WTC11 (cell line): ENCODE measurements at regions of chr16 and their contacts with region 1.

Region 1: DNA sequence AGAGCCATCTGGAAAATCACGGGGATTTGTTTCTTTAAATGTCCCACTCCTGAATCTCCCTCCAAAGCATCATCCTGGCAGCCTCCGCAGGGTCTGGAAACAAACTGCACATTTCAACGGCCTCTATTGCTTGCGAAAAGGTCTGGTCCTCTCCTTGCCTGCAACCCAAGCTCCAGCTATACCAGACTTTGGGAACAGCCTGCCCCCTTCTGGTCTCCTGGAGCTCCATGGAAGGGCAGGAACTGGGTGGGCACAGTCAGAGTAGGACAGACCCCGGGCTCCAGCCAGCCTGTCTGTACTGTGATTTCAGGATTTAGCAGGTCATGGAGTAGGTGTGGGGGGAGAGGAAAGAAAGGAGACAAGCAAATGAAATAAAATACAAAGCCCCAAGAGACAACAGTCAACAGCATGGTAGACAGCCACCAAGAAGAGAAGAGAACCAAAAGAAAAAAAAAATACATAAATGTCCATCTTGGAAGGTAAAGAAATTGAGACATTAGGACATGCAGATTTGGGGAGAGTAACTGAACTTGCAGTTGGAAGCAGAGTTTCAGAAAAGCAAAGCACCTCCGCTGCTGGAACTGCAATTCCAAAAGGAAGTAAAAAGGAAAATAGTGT is 2.7 kb downstream of the XYLT1 start:
- DNase-seq: peak; percentile 77
- ATAC-seq: peak; percentile 78
- H3K4me3 Mint-ChIP-seq: peak overlapping the region; percentile 39; the same call in 1 of the 2 replicates
- H3K27ac Mint-ChIP-seq: no peak overlapping the region
- H3K4me1 Mint-ChIP-seq: peaks cover 54% of the 10 kb centered on the region
- H3K27me3 Mint-ChIP-seq: peaks cover 16% of the 10 kb centered on the region
- CTCF ChIP-seq: no peak

Region 2: DNA sequence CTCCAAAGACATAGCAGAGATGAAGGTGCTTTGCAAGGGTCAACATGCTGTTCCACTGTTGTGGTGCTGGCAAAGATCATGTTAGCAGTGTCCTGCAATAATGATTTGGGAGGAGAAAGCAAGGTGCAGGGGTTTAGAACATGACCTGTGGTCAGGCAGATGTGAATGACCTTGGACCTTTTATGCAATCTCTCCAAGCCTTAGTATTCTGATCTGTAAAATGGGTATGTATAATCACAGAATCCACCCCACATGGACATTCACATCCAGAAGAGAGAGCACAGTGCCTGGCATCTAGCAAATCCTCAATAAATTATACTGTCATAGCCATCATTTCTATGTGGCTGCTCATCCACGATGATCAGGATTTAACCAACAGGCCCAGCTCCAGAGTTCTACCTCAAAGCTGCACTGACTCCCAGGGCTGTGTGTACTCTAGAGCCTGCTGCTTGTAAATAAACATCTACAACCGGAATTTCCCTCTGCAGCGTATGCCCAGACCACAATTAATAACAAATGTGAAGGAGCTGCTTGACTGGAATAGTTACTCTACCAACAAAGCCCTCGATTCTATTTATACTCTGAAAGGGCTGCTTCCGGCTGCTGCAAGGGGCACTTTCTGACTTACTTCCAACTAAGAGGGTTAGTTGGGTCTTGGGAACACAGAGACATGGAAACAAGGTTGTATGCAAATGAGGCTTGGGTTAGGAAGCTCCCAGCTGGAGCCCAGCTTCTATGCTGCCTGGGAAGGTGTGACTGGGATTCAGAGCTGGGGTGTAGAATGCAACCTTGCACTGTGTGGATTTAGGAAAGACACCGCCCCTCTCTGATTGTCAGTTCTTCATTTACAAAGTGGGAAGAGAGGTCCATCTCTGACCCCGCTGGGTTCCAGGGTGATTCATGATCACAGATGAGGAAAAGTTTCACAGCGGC is 262.5 kb before region 1 on chr16:
- CTCF ChIA-PET with region 1: interaction called, 11 read pairs
- POLR2A ChIA-PET with region 1: no interaction called
- DNase-seq: peak; percentile 31
- ATAC-seq: peak; percentile 96
- H3K4me3 Mint-ChIP-seq: peak overlapping the region; percentile 22; the same call in 1 of the 2 replicates
- H3K27ac Mint-ChIP-seq: peak overlapping the region; percentile 92
- H3K4me1 Mint-ChIP-seq: peaks cover 26% of the 10 kb centered on the region
- H3K27me3 Mint-ChIP-seq: no peaks in the 10 kb centered on the region
- CTCF ChIP-seq: no peak

Region 3: DNA sequence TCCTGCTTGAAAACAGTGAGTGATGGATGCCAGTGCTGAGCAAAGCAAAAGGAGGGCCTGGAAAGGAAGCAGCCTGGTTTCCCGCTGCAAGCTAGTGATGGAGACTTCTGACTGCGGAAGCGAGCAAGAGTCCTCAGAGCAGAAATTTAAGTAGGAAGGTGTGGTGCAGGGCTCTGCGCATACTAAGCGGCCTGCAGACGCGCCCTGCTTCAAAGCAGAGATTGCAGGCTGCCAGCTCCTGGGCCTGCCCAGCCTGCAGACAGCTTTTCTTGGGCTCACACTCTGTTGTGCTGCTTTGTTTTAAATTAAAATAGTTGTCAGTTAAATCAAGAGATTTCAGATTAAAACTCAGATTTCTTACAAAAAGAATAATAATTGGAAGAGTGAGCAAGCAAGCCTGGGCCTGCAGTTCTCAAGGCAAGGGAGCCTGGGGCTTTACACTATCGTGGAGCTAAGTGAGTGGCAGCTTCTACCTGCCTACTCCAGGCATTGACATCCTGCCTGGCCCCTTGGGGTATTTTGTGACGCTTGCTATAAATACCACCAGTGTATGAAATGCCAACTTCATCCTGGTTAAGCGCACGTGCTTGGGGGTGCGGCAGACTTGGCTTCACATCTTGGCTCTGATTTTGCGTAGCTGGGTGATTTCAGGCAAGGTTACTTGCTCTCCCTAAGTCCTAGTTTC is 234.6 kb before region 1 on chr16:
- CTCF ChIA-PET with region 1: interaction called, 10 read pairs
- POLR2A ChIA-PET with region 1: no interaction called
- DNase-seq: no peak
- ATAC-seq: no peak
- H3K4me3 Mint-ChIP-seq: no peak overlapping the region
- H3K27ac Mint-ChIP-seq: no peak overlapping the region
- H3K4me1 Mint-ChIP-seq: no peaks in the 10 kb centered on the region
- H3K27me3 Mint-ChIP-seq: no peaks in the 10 kb centered on the region
- CTCF ChIP-seq: no peak

Region 4: DNA sequence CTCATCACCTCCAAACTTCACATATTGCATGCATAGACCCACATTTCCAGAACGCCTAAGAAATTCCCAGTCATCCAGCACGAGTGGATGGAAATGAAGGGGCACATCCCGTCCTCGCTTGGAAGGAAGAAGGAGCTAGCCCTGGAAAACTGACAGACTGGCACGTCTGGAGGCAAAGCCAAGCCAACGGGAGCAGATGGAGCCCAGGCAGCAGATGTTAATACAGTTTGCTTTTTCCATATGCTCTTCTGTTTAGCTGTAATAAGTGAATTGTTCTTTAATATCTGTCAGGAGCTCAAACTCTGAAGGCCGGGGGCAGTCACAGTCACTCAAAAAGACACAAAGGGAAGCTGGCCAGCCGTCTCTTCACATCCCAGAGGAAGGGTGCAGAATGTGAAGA is 185.0 kb before region 1 on chr16:
- CTCF ChIA-PET with region 1: interaction called, 57 read pairs
- POLR2A ChIA-PET with region 1: no interaction called
- DNase-seq: no peak
- ATAC-seq: no peak
- H3K4me3 Mint-ChIP-seq: no peak overlapping the region
- H3K27ac Mint-ChIP-seq: no peak overlapping the region
- H3K4me1 Mint-ChIP-seq: peaks cover 24% of the 10 kb centered on the region
- H3K27me3 Mint-ChIP-seq: no peaks in the 10 kb centered on the region
- CTCF ChIP-seq: no peak

Region 5: DNA sequence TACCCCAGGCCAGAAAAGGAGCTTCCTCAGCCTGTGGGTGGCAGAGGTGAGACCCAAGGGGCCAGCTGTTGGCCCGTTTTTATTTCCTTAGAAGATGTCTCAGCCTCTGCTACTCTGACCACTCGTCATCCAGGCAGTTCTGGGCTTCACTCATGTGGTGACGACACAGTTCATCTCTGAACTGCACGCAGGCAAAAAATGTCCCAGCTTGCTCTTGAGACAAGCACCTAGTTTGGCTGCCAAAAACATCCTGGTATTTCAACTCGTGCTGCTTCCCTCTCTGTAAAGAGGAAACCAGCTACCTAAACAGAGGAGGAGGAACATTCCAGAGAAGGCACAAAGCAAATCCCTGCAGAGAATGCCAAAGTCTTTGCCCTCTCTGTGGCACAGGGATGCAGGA is 123.0 kb before region 1 on chr16:
- CTCF ChIA-PET with region 1: interaction called, 10 read pairs
- POLR2A ChIA-PET with region 1: no interaction called
- DNase-seq: no peak
- ATAC-seq: no peak
- H3K4me3 Mint-ChIP-seq: no peak overlapping the region
- H3K27ac Mint-ChIP-seq: no peak overlapping the region; the same call in 1 of the 2 replicates
- H3K4me1 Mint-ChIP-seq: no peaks in the 10 kb centered on the region
- H3K27me3 Mint-ChIP-seq: no peaks in the 10 kb centered on the region
- CTCF ChIP-seq: no peak

Region 6: GRCh38 chr16:17416461-17417311 is 51.3 kb before region 1 on chr16:
- CTCF ChIA-PET with region 1: interaction called, 18 read pairs
- POLR2A ChIA-PET with region 1: no interaction called
- DNase-seq: peak; percentile 31
- ATAC-seq: peak; percentile 79
- H3K4me3 Mint-ChIP-seq: 0 out of 2 replicates have a peak overlapping the region, but pooled peaks have one; percentile 14
- H3K27ac Mint-ChIP-seq: peak overlapping the region; percentile 87
- H3K4me1 Mint-ChIP-seq: peaks cover 51% of the 10 kb centered on the region
- H3K27me3 Mint-ChIP-seq: no peaks in the 10 kb centered on the region; the same call in 1 of the 2 replicates
- CTCF ChIP-seq: no peak